Naive thymus-derived CD8-positive, alpha-beta T cell (primary cell): ENCODE measurements at regions of chr9 and their contacts with region 1.

Region 1: GRCh38 chr9:4679268-4680172 is at the start of gene CDC37L1:
- DNase-seq: peak; percentile 96 to 100 (median 99)
- ATAC-seq: peak; percentile 90 to 93
- H3K4me3 Mint-ChIP-seq: no peak within 1 kb of the TSS
- H3K27ac Mint-ChIP-seq: no peak within 1 kb of the TSS
- H3K4me1 Mint-ChIP-seq: peaks cover 12 to 13% (median 12%) of the 10 kb centered on the region in 4 donors
- H3K27me3 Mint-ChIP-seq: peaks cover 0 to 5% (median 0%) of the 10 kb centered on the region in 5 donors
- polyA plus RNA-seq, gene CDC37L1: 18.5 to 19.2 (median 19.1) TPM

Region 2: GRCh38 chr9:4461437-4461836 is 218.1 kb before region 1 on chr9:
- POLR2A ChIA-PET with region 1: no interaction called
- DNase-seq: no peak
- ATAC-seq: no peak
- H3K4me3 Mint-ChIP-seq: no peak overlapping the region
- H3K27ac Mint-ChIP-seq: no peak overlapping the region
- H3K4me1 Mint-ChIP-seq: peaks cover 0 to 6% (median 0%) of the 10 kb centered on the region in 4 donors
- H3K27me3 Mint-ChIP-seq: peaks cover 0 to 11% (median 7%) of the 10 kb centered on the region in 5 donors

Region 3: GRCh38 chr9:4662108-4662988 is 17.2 kb before region 1 on chr9 and contains the start of gene PLPP6:
- POLR2A ChIA-PET with region 1: interaction called, 142 read pairs
- DNase-seq: peak; percentile 60 to 90 (median 76)
- ATAC-seq: peak; percentile 68 to 74
- H3K4me3 Mint-ChIP-seq: peak within 1 kb of the TSS; percentile 89 to 99 (median 94)
- H3K27ac Mint-ChIP-seq: peak within 1 kb of the TSS; percentile 95 to 99 (median 96)
- H3K4me1 Mint-ChIP-seq: peaks cover 32 to 68% (median 59%) of the 10 kb centered on the region in 4 donors
- H3K27me3 Mint-ChIP-seq: peaks cover 0 to 6% (median 0%) of the 10 kb centered on the region in 5 donors
- polyA plus RNA-seq, gene PLPP6: 4.9 to 6.1 (median 5.8) TPM

Region 4: GRCh38 chr9:4667681-4668080 is 11.8 kb before region 1 on chr9:
- POLR2A ChIA-PET with region 1: interaction called, 142 read pairs
- DNase-seq: peak in 6 of 10 donors; percentile 30 to 71 (median 62)
- ATAC-seq: peak; percentile 75 to 78
- H3K4me3 Mint-ChIP-seq: peak overlapping the region; percentile 0 to 99 (median 64)
- H3K27ac Mint-ChIP-seq: peak overlapping the region; percentile 5 to 95 (median 86)
- H3K4me1 Mint-ChIP-seq: peaks cover 32 to 78% (median 64%) of the 10 kb centered on the region in 4 donors
- H3K27me3 Mint-ChIP-seq: no peaks in the 10 kb centered on the region